ENCODE measurements at regions of chr2 and their contacts with region 1.

Region 1: GRCh38 chr2:218429571-218430301 is 10.8 kb downstream of the VIL1 start:
- DNase-seq: peak; percentile 20

Region 2: GRCh38 chr2:218648088-218648786 is 218.5 kb after region 1 on chr2:
- intact Hi-C with region 1: loop called in 1 of 2 experiments (anchors 10 kb)
- DNase-seq: no peak

Region 3: DNA sequence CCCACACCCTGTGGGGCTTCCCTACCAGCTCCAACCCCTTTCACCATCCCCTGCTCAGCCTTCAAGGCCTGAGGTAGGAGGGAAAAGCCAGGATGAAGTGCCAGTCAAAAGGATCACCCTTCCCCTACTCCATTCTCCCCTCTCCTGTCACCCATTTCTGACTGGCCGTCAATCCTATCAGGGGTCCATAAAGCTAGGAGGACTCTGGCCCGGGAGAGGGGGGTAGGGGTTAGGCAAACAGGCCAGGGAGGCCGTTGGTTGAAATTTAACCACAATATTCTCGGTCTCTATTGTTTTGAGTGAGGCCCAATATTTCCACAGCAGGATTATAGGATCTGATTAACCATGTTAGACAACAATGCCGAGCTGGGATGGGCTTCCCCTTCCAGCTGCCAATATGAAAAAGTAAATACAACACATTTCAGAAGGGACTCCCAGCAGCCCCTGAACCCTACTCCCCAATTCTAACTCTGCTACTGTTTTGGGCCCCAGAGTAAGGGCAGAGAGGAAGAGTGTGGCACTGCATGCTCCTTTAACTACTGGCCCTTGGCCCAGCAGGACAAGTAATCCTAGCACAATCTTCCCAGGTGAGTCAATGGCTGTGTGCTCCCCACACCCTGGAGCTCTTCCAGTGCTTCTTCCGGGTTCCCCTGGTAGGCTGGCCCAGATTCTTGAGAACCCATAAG is 641.5 kb after region 1 on chr2:
- intact Hi-C with region 1: no loop called
- DNase-seq: peak; percentile 31